ENCODE measurements at regions of chr16 and their contacts with region 1.

Region 1: DNA sequence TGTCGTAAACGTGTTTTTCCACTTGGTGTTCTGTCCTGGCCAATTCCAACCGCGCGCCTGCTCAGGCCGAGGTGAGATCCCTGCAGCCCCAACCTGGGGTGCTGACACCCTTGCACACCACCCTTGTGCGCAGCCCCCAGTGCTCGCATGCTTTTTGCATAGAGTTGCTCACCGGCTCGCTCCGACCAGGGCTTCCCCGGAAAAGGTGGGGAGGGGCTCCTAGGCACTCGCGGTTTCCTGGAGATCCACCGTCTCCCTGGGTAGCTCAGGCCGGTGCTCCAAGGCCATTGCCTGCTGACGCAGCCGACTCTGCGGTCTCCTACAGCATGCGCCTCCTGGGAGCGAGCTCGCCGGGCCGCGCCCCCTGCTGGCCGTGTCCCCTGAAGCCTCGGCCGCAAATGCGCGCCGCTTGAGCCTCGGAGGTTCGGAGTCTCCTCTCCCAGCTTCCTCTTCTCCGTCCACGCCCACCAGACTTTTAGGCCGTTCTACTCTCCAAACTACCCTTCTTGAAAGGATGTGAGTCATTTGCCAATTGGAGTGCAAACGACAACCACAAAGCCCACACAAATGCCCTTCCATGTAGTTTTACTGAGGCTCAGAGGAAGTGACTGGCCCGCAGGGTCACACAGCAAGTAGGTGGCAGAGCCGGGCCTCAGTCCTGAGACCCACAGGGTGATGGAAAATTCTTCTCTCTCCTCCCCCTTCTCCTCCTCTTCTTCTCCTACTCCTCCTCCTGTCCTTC is 7.2 kb upstream of the PDP2 start:
- DNase-seq: peak; percentile 96
- H3K4me3 ChIP-seq: no peak overlapping the region
- H3K27ac ChIP-seq: no peak overlapping the region
- H3K4me1 ChIP-seq: peaks cover 12% of the 10 kb centered on the region
- H3K27me3 ChIP-seq: peaks cover 0 to 2% of the 10 kb centered on the region in 2 experiments
- CTCF ChIP-seq: peak; percentile 99
- POLR2A ChIP-seq: peak; percentile 58

Region 2: DNA sequence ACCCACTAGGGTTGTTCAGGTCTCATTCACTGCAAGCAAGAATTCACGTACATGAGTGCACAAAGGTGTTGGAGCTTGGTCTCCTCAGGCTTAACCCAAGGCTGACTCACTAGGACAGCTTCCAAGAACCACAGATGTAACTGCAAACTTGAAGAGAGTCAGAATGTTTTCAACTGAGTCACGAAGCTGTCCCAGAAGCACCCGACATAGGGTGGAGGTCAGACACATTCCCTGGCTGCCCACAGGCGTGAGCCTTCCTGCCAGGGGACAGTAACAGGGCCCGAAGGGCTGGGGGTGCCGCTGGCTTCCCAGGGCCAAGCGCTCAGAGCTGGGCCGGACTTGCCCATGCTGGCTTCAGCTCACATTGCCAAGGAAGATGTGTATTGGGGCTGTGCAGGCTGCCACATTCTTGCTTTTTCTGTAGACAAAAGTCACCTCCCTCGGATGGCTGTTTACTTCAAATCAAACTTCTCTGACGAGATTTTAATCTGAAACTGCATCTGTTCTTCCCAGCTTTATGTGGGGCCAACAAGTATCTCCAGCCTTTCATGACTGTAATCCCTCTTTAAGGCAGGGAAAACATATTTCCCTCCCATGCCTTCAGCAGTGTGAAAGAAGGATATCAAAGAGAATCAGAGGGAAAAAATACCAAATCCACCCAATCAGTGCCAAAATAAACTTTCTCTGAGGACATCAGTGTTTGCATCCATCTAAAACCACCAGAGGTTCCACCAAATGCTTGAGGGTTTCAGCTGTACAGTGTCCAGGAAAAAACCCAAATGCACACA is 254.3 kb before region 1 on chr16:
- CTCF ChIA-PET with region 1: interaction called, 18 read pairs
- POLR2A ChIA-PET with region 1: no interaction called
- dilution Hi-C with region 1: no loop called
- intact Hi-C with region 1: no loop called
- DNase-seq: peak; percentile 71
- H3K4me3 ChIP-seq: no peak overlapping the region
- H3K27ac ChIP-seq: peak overlapping the region; percentile 19
- H3K4me1 ChIP-seq: peaks cover 20% of the 10 kb centered on the region
- H3K27me3 ChIP-seq: no peaks in the 10 kb centered on the region
- CTCF ChIP-seq: no peak
- POLR2A ChIP-seq: no peak

Region 3: GRCh38 chr16:66660422-66661209 is 212.5 kb before region 1 on chr16:
- CTCF ChIA-PET with region 1: interaction called, 62 read pairs
- POLR2A ChIA-PET with region 1: no interaction called
- dilution Hi-C with region 1: no loop called
- intact Hi-C with region 1: loop called (anchors 1 kb)
- DNase-seq: peak; percentile 90
- H3K4me3 ChIP-seq: no peak overlapping the region
- H3K27ac ChIP-seq: peak overlapping the region; percentile 49
- H3K4me1 ChIP-seq: peaks cover 25% of the 10 kb centered on the region
- H3K27me3 ChIP-seq: no peaks in the 10 kb centered on the region
- CTCF ChIP-seq: peak in 1 of 2 donors; percentile 25
- POLR2A ChIP-seq: no peak

Region 4: DNA sequence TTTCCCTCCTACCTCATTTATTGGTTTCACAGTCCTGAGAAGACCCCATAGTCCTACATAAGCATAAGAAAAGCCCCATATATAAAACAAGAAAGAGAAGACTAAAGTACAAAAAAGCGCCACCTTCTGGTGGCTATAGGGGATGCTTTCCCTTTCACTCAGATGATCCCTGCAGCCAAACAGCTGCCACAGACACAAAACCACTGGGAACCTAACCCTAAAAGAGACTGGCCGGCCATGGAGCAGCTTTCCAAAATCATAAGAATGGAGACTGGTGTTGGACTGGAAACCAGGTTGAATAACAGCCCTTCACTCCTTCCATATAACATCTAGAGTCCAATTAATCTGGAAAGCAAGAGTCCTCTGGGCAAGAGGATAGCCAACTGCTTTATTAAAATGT is 133.1 kb before region 1 on chr16:
- CTCF ChIA-PET with region 1: interaction called, 19 read pairs
- POLR2A ChIA-PET with region 1: interaction called, 11 read pairs
- dilution Hi-C with region 1: no loop called
- intact Hi-C with region 1: loop called (anchors 1 kb)
- DNase-seq: peak; percentile 54
- H3K4me3 ChIP-seq: no peak overlapping the region
- H3K27ac ChIP-seq: peak overlapping the region; percentile 97
- H3K4me1 ChIP-seq: peaks cover 34% of the 10 kb centered on the region
- H3K27me3 ChIP-seq: no peaks in the 10 kb centered on the region
- CTCF ChIP-seq: peak; percentile 58 to 60
- POLR2A ChIP-seq: no peak

Region 5: GRCh38 chr16:66824006-66824405 is 49.1 kb before region 1 on chr16:
- CTCF ChIA-PET with region 1: interaction called, 153 read pairs
- POLR2A ChIA-PET with region 1: no interaction called
- dilution Hi-C with region 1: no loop called
- intact Hi-C with region 1: no loop called
- DNase-seq: no peak
- H3K4me3 ChIP-seq: no peak overlapping the region
- H3K27ac ChIP-seq: no peak overlapping the region
- H3K4me1 ChIP-seq: no peaks in the 10 kb centered on the region
- H3K27me3 ChIP-seq: no peaks in the 10 kb centered on the region
- CTCF ChIP-seq: no peak
- POLR2A ChIP-seq: no peak

Region 6: GRCh38 chr16:66850115-66850815 is 22.8 kb before region 1 on chr16:
- CTCF ChIA-PET with region 1: interaction called, 43 read pairs
- POLR2A ChIA-PET with region 1: no interaction called
- dilution Hi-C with region 1: no loop called
- intact Hi-C with region 1: no loop called
- DNase-seq: no peak
- H3K4me3 ChIP-seq: no peak overlapping the region
- H3K27ac ChIP-seq: no peak overlapping the region
- H3K4me1 ChIP-seq: no peaks in the 10 kb centered on the region
- H3K27me3 ChIP-seq: peaks cover 22 to 26% of the 10 kb centered on the region in 2 experiments
- CTCF ChIP-seq: no peak
- POLR2A ChIP-seq: no peak

Region 7: DNA sequence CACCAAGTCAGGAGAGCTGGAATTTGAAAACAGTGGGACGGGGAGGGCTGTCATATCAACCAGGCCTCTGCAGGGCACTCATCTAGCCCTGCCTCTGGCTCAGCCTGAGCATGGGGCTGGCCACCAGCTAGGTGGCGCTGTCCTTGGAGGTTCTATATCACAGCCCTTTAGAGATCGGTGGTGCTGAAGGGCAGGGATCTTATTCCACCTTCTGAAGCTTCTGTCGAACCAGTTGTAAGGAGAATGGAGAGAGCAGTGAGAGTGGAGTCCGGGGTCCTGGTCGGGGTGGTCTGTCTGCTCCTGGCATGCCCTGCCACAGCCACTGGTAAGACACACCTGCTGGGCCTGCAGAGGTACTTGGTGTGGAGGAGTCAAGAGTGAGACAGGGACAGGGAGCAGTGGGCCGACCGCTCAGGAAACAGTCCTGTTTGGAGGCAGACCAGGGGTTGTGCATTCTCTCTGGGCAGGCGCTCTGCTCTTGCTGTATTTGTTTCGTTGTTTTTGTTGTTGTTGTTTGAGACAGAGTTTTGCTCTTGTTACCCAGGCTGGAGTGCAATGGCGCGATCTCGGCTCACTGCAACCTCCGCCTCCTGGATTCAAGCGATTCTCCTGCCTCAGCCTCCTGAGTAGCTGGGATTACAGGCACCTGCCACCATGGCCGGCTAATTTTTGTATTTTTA is 88.1 kb after region 1 on chr16 and contains the start of gene CES3:
- CTCF ChIA-PET with region 1: no interaction called
- POLR2A ChIA-PET with region 1: no interaction called
- dilution Hi-C with region 1: no loop called
- intact Hi-C with region 1: no loop called
- DNase-seq: peak; percentile 46
- H3K4me3 ChIP-seq: no peak within 1 kb of the TSS
- H3K27ac ChIP-seq: no peak within 1 kb of the TSS
- H3K4me1 ChIP-seq: no peaks in the 10 kb centered on the region
- H3K27me3 ChIP-seq: peaks cover 2 to 4% of the 10 kb centered on the region in 2 experiments
- CTCF ChIP-seq: peak; percentile 88 to 94
- POLR2A ChIP-seq: no peak
- total RNA-seq, gene CES3: not detected in 2 replicates